Activated T-helper 1 cell treated with anti-CD3 and anti-CD28 coated beads, Interleukin-12 subunit alpha, Interleukin-12 subunit beta, Interleukin-2, Interleukin-4 antibody, amounts not matched to agents 30 ng/mL and 10 ng/mL and 1 ng/mL, durations not matched to agents 14 hours and 24 hours and 36 hours (primary cell): ENCODE measurements at regions of chr17 and their contacts with region 1.

Region 1: DNA sequence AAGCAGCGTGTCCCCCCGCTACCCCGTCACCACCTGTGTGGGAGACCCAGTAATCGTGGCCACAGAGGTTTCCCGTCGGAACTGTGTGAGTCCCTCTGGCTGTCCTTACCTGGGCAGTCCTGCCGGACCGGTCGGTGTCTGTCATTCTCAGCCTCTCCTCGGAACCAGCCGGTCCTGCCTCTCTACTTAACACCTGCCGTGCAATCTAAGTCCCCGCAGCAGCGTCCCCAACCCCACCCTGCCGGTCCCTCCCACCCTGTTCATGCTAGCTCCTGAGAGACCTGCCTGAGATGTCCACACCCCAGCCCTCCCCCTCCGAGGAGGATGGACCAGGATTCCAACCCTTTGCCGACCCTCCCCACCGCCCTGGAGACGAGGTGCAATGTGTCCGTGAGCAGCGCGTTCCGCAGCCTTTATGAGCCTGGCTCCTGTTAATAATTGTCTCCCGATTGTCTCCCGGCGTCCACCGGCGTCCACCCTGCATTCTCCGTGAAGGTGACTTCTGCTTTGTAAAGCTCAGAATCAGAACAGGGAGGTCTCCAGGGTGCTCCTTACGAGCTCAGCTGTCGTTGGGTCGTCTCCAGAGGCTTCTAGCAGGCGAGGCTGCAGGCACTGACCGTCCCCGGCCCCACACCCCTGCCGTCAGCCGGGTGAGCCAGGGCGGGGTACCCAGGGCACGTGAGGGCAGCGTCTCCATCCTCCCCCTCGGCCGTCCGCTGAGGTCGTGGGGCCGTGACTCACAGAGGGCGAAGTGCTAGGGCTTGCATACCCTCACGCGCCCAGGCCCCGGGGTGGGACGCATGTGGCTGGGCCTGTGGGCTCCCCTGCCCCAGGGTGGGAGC is 10.1 kb downstream of the METRNL start:
- DNase-seq: no peak
- H3K4me3 Mint-ChIP-seq: no peak overlapping the region
- H3K27ac Mint-ChIP-seq: no peak overlapping the region
- H3K4me1 Mint-ChIP-seq: peaks cover 10% of the 10 kb centered on the region
- H3K27me3 Mint-ChIP-seq: no peaks in the 10 kb centered on the region

Region 2: GRCh38 chr17:83119987-83120864 is 30.7 kb after region 1 on chr17:
- intact Hi-C with region 1: loop called (anchors 5 kb)
- DNase-seq: no peak
- H3K4me3 Mint-ChIP-seq: peak overlapping the region; percentile 66
- H3K27ac Mint-ChIP-seq: no peak overlapping the region
- H3K4me1 Mint-ChIP-seq: peaks cover 25% of the 10 kb centered on the region
- H3K27me3 Mint-ChIP-seq: peaks cover 26% of the 10 kb centered on the region